Sciatic nerve (tissue), 2 donors: ENCODE measurements at regions of chr5 and their contacts with region 1.

Region 1: DNA sequence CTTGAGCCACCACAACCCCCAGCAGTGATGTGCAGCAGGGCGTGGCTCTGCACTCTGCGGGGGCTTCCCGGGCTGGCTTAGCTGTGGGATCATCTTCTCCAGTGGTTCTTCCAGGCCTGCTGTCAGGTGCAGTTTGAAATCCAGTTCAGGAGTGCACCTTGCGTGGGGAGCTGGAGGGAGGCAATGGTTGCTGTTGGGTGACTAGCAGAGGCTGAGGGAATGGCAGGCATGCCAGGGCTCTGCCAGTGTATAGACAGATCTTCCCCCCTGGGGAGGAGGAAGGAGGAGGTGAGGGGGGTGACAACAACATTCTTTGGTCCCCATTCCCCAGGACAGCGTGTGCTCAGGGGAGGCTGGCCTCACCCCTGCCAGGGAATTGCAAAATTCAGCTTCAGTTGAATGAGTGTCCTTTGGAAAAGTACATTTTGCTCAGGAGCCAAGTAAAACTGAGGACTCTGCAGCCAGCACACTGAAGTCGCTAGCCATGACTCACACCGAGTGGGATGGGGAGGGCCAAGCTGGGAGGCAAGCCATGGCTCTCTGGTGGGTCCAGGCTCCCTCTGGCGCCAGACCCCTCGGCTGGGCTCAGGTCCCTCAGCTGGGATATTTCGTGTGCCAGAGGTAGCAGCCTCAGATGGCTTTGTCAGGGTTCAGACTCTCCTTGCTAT is 35.0 kb downstream of the ERGIC1 start:
- DNase-seq: peak; percentile 83
- ATAC-seq: peak; percentile 89

Region 2: GRCh38 chr5:172764849-172765765 is 104.0 kb before region 1 on chr5:
- intact Hi-C with region 1: loop called (anchors 10 kb)
- DNase-seq: peak; percentile 94
- ATAC-seq: peak; percentile 74

Region 3: GRCh38 chr5:172816901-172817564 is 52.0 kb before region 1 on chr5:
- intact Hi-C with region 1: no loop called
- DNase-seq: no peak
- ATAC-seq: no peak